Aorta (tissue), 5 donors: ENCODE measurements at regions of chr6 and their contacts with region 1.

Region 1: DNA sequence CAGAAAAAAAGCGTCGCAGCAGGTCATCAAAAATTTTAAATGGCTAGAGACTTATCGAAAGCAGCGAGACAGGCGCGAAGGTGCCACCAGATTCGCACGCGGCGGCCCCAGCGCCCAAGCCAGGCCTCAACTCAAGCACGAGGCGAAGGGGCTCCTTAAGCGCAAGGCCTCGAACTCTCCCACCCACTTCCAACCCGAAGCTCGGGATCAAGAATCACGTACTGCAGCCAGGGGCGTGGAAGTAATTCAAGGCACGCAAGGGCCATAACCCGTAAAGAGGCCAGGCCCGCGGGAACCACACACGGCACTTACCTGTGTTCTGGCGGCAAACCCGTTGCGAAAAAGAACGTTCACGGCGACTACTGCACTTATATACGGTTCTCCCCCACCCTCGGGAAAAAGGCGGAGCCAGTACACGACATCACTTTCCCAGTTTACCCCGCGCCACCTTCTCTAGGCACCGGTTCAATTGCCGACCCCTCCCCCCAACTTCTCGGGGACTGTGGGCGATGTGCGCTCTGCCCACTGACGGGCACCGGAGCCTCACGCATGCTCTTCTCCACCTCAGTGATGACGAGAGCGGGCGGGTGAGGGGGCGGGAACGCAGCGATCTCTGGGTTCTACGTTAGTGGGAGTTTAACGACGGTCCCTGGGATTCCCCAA is at the start of gene EEF1A1:
- DNase-seq: peak; percentile 100
- ATAC-seq: peak; percentile 96
- H3K4me3 ChIP-seq: peak within 1 kb of the TSS; percentile 44 to 87
- H3K27ac ChIP-seq: peak within 1 kb of the TSS; percentile 91 to 96
- H3K4me1 ChIP-seq: no peaks in the 10 kb centered on the region
- H3K27me3 ChIP-seq: peaks cover 0 to 2% of the 10 kb centered on the region in 2 donors
- total RNA-seq, gene EEF1A1: 7,659 to 8,197 TPM

Region 2: GRCh38 chr6:73388800-73389512 is 131.9 kb before region 1 on chr6:
- intact Hi-C with region 1: no loop called
- DNase-seq: peak; percentile 63 to 83
- ATAC-seq: peak; percentile 86
- H3K4me3 ChIP-seq: peak overlapping the region; percentile 53 to 89
- H3K27ac ChIP-seq: peak overlapping the region in 1 of 2 donors; percentile 42
- H3K4me1 ChIP-seq: peaks cover 0 to 2% of the 10 kb centered on the region in 2 donors
- H3K27me3 ChIP-seq: no peaks in the 10 kb centered on the region

Region 3: GRCh38 chr6:73451223-73452107 is 69.4 kb before region 1 on chr6:
- intact Hi-C with region 1: no loop called
- DNase-seq: peak; percentile 62 to 84
- ATAC-seq: peak; percentile 87
- H3K4me3 ChIP-seq: peak overlapping the region; percentile 57 to 61
- H3K27ac ChIP-seq: peak overlapping the region in 1 of 2 donors; percentile 41
- H3K4me1 ChIP-seq: no peaks in the 10 kb centered on the region
- H3K27me3 ChIP-seq: no peaks in the 10 kb centered on the region

Region 4: DNA sequence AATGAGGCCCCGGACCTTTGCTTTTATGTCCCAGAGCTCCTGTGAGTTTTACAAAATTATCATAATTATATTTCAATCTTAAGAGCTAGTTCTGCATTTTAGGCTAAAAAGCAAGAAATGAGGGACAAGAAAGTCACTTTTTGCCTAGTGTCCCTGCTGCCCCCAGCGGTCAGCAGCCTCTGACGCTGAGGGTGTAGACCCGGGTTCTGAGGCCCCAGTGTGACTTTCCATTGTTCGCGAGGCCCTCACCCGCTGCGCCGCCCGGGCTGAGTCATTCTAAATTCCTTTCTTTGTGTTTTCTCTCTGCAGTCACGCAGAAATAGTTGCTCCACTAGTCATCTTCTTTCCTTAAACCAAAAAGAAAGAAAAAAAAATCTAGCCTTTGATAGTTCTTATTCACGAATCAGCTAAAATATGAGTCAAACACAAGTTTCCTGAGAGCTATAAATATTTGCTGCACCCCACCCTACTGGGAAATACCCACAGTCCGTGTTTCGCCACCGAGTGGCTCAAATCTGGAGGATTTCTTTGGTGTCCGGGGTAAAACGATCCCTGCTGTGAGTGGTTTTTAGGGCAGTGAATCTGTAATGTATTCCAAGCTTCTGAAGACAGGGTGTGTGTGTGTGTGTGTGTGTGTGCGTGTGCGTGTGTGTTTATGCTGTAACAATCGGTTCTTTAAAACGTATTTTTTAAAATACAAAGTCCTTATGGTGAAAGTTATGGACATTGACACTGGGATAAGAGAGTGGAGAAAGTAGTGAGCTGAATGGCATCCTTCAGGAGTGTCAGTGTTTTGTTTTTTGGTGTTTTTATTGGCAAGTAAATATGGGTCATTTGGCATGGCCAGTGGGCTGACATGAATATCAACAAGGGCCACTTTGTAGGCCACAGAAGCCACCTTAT is 59.7 kb after region 1 on chr6:
- intact Hi-C with region 1: loop called (anchors 1 to 2 kb)
- DNase-seq: peak; percentile 92 to 96
- ATAC-seq: peak; percentile 95
- H3K4me3 ChIP-seq: peak overlapping the region in 1 of 2 donors; percentile 45
- H3K27ac ChIP-seq: peak overlapping the region; percentile 87 to 92
- H3K4me1 ChIP-seq: peaks cover 0 to 5% of the 10 kb centered on the region in 2 donors
- H3K27me3 ChIP-seq: no peaks in the 10 kb centered on the region